Colonic mucosa (tissue), 4 donors: ENCODE measurements at regions of chr2 and their contacts with region 1.

Region 1: DNA sequence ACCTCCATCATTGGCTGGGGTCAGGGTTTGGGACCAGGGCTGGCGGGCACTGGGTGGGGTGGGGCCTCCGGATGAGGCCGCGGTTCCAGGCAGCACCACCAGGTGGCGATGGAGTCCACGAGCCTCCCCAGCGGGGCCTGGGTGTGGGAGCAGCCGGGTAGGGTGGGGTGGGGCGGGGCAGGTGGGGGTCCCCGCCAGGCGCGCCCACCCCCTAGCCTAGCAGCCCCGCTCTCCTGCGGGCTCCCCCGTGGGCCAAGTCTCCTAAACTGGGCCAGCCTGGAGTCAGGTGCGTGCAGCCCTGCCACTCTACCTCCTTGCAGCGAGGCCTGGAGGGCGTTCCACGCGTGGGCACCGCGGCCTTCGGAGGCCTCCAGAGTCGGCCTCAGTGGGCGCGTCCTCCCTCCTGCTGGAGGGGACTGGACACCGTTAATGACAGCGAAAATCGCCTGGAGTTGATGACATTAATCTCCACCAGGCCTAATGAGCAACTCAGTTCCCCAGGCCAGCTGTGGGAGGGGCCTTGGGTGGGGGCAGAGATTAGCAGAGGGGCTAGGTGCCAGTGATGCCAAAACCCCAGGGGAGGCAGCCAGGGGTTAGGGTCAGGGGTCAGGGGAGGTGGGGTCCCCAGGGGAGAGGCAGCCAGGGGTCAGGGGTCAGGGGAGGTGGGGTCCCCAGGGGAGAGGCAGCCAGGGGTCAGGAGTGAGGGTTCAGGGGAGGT is 187.6 kb downstream of the TWIST2 start:
- DNase-seq: peak; percentile 58
- H3K4me3 ChIP-seq: no peak overlapping the region
- H3K27ac ChIP-seq: no peak overlapping the region
- H3K4me1 ChIP-seq: no peaks in the 10 kb centered on the region
- H3K27me3 ChIP-seq: no peaks in the 10 kb centered on the region
- CTCF ChIP-seq: peak; percentile 92

Region 2: DNA sequence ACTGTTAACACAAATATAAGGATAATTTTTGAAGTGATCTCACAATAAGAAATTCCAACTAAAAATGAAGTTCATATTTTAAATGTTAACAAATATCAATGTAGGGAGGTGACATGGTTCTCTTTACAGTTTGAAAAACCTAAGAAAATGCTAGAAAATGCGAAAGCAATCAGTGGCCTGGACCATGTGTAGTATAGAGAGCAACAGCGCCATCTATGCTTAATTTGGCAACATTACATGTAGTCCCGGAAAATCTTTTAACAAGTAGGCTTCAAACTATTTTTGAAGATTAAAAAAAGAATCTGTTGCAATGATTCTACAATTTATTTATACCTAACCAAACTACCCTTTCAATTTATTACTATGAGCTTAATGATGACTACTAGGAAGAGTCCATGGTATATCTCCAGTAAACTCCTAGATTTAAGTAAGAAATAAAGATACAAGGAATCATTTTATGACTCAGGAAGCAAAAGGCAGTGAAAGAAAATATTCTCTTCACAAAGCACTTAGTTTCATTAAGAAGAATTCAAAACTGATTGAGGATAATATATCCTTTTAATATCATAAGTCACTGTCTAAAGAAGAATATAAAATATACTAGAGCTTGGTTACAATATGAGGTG is 956.3 kb after region 1 on chr2:
- intact Hi-C with region 1: loop called (anchors 10 kb)
- DNase-seq: no peak
- H3K4me3 ChIP-seq: no peak overlapping the region
- H3K27ac ChIP-seq: no peak overlapping the region
- H3K4me1 ChIP-seq: no peaks in the 10 kb centered on the region
- H3K27me3 ChIP-seq: no peaks in the 10 kb centered on the region
- CTCF ChIP-seq: peak; percentile 91